Spleen (tissue), 13 donors: ENCODE measurements at regions of chr11 and their contacts with region 1.

Region 1: GRCh38 chr11:112086422-112087191 is at the starts of genes SDHD and TIMM8B:
- DNase-seq: peak; percentile 97
- H3K4me3 ChIP-seq: peak within 1 kb of the TSS; percentile 69 to 98 (median 83)
- H3K27ac ChIP-seq: peak within 1 kb of the TSS; percentile 69 to 91 (median 81)
- H3K4me1 ChIP-seq: peaks cover 25 to 58% (median 45%) of the 10 kb centered on the region in 6 donors
- H3K27me3 ChIP-seq: no peaks in the 10 kb centered on the region
- CTCF ChIP-seq: peak in 8 of 11 experiments; percentile 7 to 56 (median 45)
- POLR2A ChIP-seq: no peak
- total RNA-seq, gene SDHD: 77.3 to 99.9 (median 90.7) TPM
- total RNA-seq, gene TIMM8B: 16.8 to 38.4 (median 29.4) TPM

Region 2: DNA sequence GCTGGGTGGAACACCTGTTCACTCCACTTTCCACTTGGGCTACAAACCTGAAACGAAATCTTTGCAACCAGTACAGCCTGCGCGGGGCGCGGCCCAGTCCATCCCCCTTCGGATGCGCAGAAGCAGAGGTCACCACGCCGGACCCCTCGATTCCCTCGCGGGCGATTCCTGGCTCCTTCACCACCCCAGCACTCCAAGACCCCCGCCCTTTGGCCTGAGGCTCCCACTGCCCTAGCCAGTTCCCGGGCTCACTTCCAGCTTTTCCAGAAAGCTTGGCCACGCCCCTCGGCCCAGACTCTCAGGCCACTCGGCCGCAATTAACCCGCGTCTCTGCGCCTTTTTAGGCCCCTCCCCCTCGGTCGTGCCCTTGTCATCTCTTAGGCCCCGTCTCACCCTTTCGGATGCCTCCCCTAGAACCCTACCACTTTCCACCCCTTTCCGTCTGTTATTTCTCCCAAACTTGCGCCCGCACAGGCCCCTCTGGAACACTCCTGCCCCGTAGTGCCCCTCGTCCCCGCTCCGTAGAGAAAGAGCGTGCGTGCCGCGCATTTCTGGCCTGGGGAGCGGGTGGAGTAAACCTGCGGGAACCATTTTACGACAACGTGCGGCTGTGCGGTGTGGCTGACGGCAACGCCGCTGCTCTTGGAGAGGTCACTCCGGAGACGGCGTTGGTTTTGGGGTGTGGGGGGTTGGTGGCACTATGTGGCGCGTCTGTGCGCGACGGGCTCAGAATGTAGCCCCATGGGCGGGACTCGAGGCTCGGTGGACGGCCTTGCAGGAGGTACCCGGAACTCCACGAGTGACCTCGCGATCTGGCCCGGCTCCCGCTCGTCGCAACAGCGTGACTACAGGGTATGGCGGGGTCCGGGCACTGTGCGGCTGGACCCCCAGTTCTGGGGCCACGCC is 61.6 kb before region 1 on chr11 and contains the start of gene DLAT:
- intact Hi-C with region 1: loop called (anchors 5 kb)
- DNase-seq: peak; percentile 96
- H3K4me3 ChIP-seq: peak within 1 kb of the TSS; percentile 58 to 88 (median 82)
- H3K27ac ChIP-seq: peak within 1 kb of the TSS; percentile 69 to 94 (median 92)
- H3K4me1 ChIP-seq: peaks cover 8 to 30% (median 22%) of the 10 kb centered on the region in 6 donors
- H3K27me3 ChIP-seq: no peaks in the 10 kb centered on the region
- CTCF ChIP-seq: peak in 1 of 11 experiments; percentile 14
- POLR2A ChIP-seq: peak in 1 of 3 donors; percentile 54
- total RNA-seq, gene DLAT: 17.5 to 22.9 (median 19.2) TPM

Region 3: GRCh38 chr11:112564228-112564955 is 477.8 kb after region 1 on chr11:
- intact Hi-C with region 1: no loop called
- DNase-seq: no peak
- H3K4me3 ChIP-seq: no peak overlapping the region
- H3K27ac ChIP-seq: no peak overlapping the region
- H3K4me1 ChIP-seq: no peaks in the 10 kb centered on the region
- H3K27me3 ChIP-seq: no peaks in the 10 kb centered on the region
- CTCF ChIP-seq: no peak
- POLR2A ChIP-seq: no peak